IMR-90 (cell line): ENCODE measurements at regions of chr12 and their contacts with region 1.

Region 1: DNA sequence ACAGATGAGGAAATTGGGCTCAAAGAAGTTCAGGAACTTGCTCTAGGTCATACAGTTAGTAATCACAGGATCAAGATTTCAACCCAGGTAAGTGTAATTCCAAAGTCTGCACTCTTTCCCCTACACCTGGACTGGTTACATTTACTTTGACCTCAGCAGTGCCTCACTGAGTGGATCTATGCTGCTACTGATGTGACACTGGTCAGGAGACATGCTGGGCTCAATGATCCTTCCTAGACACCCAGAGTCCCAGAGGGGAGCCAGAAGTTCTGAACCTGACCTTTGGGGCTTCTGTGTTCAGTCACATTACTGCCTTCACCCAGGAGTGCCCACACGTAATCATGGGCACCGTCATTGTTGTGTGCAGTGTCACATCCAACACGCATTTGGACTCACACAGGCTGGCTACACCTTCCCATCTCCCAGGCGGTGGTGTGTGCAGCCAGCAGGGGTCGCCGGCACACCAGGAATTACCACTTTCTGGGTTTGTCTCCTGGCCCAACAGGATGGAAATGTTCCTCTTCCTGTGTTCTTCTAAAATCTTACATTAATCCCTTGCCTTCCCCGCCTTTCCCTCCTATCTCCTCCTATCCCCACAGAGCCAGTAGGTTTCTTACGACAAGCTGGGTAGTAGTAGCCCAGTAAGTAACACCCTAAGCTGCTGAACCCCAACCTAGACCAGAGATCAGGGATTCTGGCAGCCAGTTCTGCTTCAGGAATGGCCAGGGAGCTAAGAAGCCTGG is 25.6 kb downstream of the CALCOCO1 start:
- DNase-seq: peak; percentile 66
- ATAC-seq: peak; percentile 98
- H3K4me3 ChIP-seq: no peak overlapping the region
- H3K27ac ChIP-seq: no peak overlapping the region
- H3K4me1 ChIP-seq: no peaks in the 10 kb centered on the region
- H3K27me3 ChIP-seq: peaks cover 67% of the 10 kb centered on the region
- CTCF ChIP-seq: peak; percentile 98
- POLR2A ChIP-seq: no peak
- RAD21 ChIP-seq: peak; percentile 97

Region 2: GRCh38 chr12:54053751-54054741 is 352.4 kb after region 1 on chr12 and contains the start of gene HOXC4:
- CTCF ChIA-PET with region 1: no interaction called
- POLR2A ChIA-PET with region 1: no interaction called
- dilution Hi-C with region 1: no loop called
- in situ Hi-C with region 1: no loop called
- intact Hi-C with region 1: no loop called
- DNase-seq: peak; percentile 1
- ATAC-seq: no peak; the same call in none of the 2 replicates
- H3K4me3 ChIP-seq: peak within 1 kb of the TSS; percentile 15; the same call in 1 of the 2 replicates
- H3K27ac ChIP-seq: no peak within 1 kb of the TSS
- H3K4me1 ChIP-seq: no peaks in the 10 kb centered on the region
- H3K27me3 ChIP-seq: peaks cover 72% of the 10 kb centered on the region
- CTCF ChIP-seq: no peak
- POLR2A ChIP-seq: no peak
- RAD21 ChIP-seq: no peak
- total RNA-seq, gene HOXC4: under 0.01 TPM in 1 of 2 replicates, not detected in the other

Region 3: DNA sequence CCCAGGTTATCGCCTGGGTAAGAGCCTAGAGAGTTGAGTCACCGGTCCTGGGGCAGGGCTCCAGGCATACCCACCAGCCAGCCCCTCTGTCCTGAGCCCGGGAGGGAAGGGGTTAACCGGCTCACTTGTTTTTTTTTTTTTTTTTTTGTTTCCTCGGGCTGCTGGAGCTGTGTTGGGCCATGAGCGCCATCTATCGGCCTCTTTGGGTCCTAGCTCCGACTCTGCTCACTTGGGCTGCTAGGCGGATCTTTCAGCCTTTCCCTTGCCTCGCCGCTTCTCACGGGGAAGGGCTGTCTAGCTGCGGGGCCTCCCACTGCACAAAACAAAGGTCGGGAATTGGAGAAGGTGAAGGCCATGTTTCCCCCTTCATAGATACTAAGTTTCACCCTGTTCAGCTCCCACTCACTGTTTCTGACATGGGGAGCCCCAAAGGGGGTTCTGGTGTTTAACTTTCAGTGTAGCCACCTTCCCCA is 489.9 kb after region 1 on chr12:
- CTCF ChIA-PET with region 1: no interaction called
- POLR2A ChIA-PET with region 1: no interaction called
- dilution Hi-C with region 1: no loop called
- in situ Hi-C with region 1: loop called (anchors 10 kb)
- intact Hi-C with region 1: no loop called
- DNase-seq: peak; percentile 79
- ATAC-seq: peak; percentile 74
- H3K4me3 ChIP-seq: no peak overlapping the region
- H3K27ac ChIP-seq: no peak overlapping the region
- H3K4me1 ChIP-seq: peaks cover 2% of the 10 kb centered on the region
- H3K27me3 ChIP-seq: peaks cover 21% of the 10 kb centered on the region
- CTCF ChIP-seq: peak; percentile 89
- POLR2A ChIP-seq: no peak
- RAD21 ChIP-seq: peak; percentile 81